ENCODE measurements at regions of chrX and their contacts with region 1.

Region 1: GRCh38 chrX:14029425-14030173 is at the start of gene GEMIN8:
- DNase-seq: peak; percentile 83 to 94 (median 93)
- ATAC-seq: peak; percentile 98
- H3K4me3 ChIP-seq: peak within 1 kb of the TSS; percentile 54 to 58
- H3K27ac ChIP-seq: peak within 1 kb of the TSS; percentile 84 to 91
- H3K4me1 ChIP-seq: peaks cover 0 to 3% of the 10 kb centered on the region in 2 donors
- H3K27me3 ChIP-seq: no peaks in the 10 kb centered on the region
- CTCF ChIP-seq: no peak
- polyA plus RNA-seq, gene GEMIN8: 29.9 to 35.4 (median 32.8) TPM

Region 2: DNA sequence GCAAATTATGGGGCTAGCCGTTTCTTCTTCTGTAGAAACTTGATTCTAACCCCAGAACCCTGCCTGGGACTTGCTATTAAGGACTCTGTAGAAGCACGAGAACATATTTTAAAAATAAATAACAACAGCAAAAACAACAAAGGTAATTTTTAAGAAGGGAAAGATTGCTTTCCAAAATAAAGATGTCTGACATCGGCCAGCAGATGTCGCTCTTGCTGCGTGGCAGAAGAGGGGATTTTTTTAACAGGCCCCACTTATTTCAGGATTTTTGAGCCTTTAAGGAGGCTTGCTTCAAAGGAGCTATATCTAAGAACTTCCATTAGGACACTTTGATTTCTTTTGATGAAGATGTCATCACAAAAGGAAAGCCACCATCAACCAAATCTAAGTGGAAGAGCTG is 523.0 kb before region 1 on chrX:
- intact Hi-C with region 1: loop called in 1 of 2 experiments (anchors 10 kb)
- DNase-seq: peak in 2 of 4 donors; percentile 27 to 51
- ATAC-seq: peak; percentile 41
- H3K4me3 ChIP-seq: no peak overlapping the region
- H3K27ac ChIP-seq: no peak overlapping the region
- H3K4me1 ChIP-seq: no peaks in the 10 kb centered on the region
- H3K27me3 ChIP-seq: peaks cover 0 to 3% of the 10 kb centered on the region in 2 donors
- CTCF ChIP-seq: peak; percentile 40 to 77

Region 3: GRCh38 chrX:13658602-13659001 is 371.0 kb before region 1 on chrX:
- intact Hi-C with region 1: loop called in 1 of 2 experiments (anchors 5 kb)
- DNase-seq: peak in 1 of 4 donors; percentile 57
- ATAC-seq: peak; percentile 74
- H3K4me3 ChIP-seq: no peak overlapping the region
- H3K27ac ChIP-seq: peak overlapping the region in 1 of 2 donors; percentile 64
- H3K4me1 ChIP-seq: peaks cover 0 to 4% of the 10 kb centered on the region in 2 donors
- H3K27me3 ChIP-seq: no peaks in the 10 kb centered on the region
- CTCF ChIP-seq: peak; percentile 45 to 59

Region 4: GRCh38 chrX:13734278-13735172 is 295.1 kb before region 1 on chrX and contains the starts of genes OFD1 and TRAPPC2:
- intact Hi-C with region 1: loop called in 1 of 2 experiments (anchors 10 kb)
- DNase-seq: peak; percentile 90 to 95 (median 93)
- ATAC-seq: peak; percentile 99
- H3K4me3 ChIP-seq: peak within 1 kb of the TSS; percentile 59 to 60
- H3K27ac ChIP-seq: peak within 1 kb of the TSS; percentile 91 to 93
- H3K4me1 ChIP-seq: peaks cover 10 to 19% of the 10 kb centered on the region in 2 donors
- H3K27me3 ChIP-seq: peaks cover 0 to 10% of the 10 kb centered on the region in 2 donors
- CTCF ChIP-seq: no peak
- polyA plus RNA-seq, gene OFD1: 55.1 to 79.1 (median 60.8) TPM
- polyA plus RNA-seq, gene TRAPPC2: 15.8 to 25.5 (median 20.9) TPM